Activated CD4-positive, alpha-beta memory T cell treated with anti-CD3 and anti-CD28 coated beads, Interleukin-2, amount 10 ng/mL, durations not matched to agents 7 days and 5 days (primary cell): ENCODE measurements at regions of chr4 and their contacts with region 1.

Region 1: DNA sequence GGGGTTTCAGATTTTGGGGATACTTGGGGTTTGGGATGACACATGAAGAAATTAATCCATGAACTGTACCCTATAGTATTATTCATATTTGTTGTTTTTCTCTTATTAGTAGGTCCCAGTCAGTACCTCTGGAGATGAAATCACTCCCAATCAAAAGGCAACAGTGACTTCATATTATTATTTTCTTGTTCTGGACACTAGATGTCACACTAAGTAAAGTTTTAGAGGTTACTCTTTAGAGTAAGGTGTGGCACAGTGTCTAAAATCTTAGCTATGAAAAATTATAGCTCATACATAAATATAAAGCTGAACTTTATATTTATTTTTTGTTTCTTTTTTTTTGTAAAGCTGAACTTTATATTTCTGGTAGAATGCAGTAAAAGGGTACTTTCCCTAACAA is 35.1 kb downstream of the FAM114A1 start:
- DNase-seq: no peak
- H3K4me3 Mint-ChIP-seq: no peak overlapping the region
- H3K27ac Mint-ChIP-seq: no peak overlapping the region
- H3K4me1 Mint-ChIP-seq: peaks cover 6% of the 10 kb centered on the region
- H3K27me3 Mint-ChIP-seq: peaks cover 7% of the 10 kb centered on the region

Region 2: DNA sequence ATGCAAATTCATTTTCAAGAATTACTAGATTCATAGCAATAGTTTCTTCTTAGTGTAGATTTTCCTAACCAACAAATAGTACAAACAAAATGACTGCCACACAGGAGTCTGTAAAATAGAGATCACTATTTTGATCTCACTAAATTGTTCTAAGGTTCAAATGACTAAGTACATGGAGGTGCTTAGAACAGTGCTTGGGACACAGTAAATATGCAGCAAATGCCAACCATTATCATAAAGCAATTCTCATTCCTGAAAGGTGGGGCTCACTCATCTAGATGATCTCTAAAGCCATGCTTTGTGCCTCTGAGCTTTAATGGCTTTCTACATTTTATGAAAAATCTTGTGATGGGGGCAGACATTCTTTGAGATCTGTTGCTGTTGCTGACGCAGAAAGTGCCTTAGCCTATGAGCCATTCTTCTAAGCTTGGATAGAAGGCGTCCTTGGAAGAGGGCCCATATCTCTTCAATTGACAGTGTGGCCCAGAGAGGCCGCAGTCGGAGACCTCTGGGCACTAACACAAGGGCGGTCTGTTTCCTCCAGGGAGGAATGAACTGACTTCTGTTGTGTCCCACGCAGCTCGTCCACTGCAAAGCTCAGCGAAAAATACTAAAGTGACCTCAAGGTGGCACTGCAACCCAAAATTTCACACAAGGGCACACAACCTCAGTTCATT is 143.4 kb before region 1 on chr4:
- CTCF ChIA-PET with region 1: interaction called, 13 read pairs
- POLR2A ChIA-PET with region 1: no interaction called
- DNase-seq: peak; percentile 61
- H3K4me3 Mint-ChIP-seq: no peak overlapping the region
- H3K27ac Mint-ChIP-seq: no peak overlapping the region
- H3K4me1 Mint-ChIP-seq: peaks cover 21% of the 10 kb centered on the region
- H3K27me3 Mint-ChIP-seq: no peaks in the 10 kb centered on the region

Region 3: GRCh38 chr4:38889143-38889542 is 13.6 kb before region 1 on chr4:
- CTCF ChIA-PET with region 1: interaction called, 10 read pairs
- POLR2A ChIA-PET with region 1: no interaction called
- DNase-seq: no peak
- H3K4me3 Mint-ChIP-seq: no peak overlapping the region
- H3K27ac Mint-ChIP-seq: peak overlapping the region; percentile 8
- H3K4me1 Mint-ChIP-seq: peaks cover 15% of the 10 kb centered on the region
- H3K27me3 Mint-ChIP-seq: no peaks in the 10 kb centered on the region

Region 4: GRCh38 chr4:38930204-38930603 is 27.5 kb after region 1 on chr4:
- CTCF ChIA-PET with region 1: no interaction called
- POLR2A ChIA-PET with region 1: no interaction called
- DNase-seq: no peak
- H3K4me3 Mint-ChIP-seq: no peak overlapping the region
- H3K27ac Mint-ChIP-seq: no peak overlapping the region
- H3K4me1 Mint-ChIP-seq: no peaks in the 10 kb centered on the region
- H3K27me3 Mint-ChIP-seq: no peaks in the 10 kb centered on the region